BJ (cell line): ENCODE measurements at regions of chr2 and their contacts with region 1.

Region 1: GRCh38 chr2:213848631-213849030 is 562.2 kb upstream of the VWC2L start:
- DNase-seq: no peak
- H3K4me3 ChIP-seq: no peak overlapping the region
- H3K27me3 ChIP-seq: no peaks in the 10 kb centered on the region
- CTCF ChIP-seq: no peak

Region 2: GRCh38 chr2:211928201-211928600 is 1920.4 kb before region 1 on chr2:
- CTCF ChIA-PET with region 1: no interaction called
- POLR2A ChIA-PET with region 1: interaction called, 18 read pairs
- DNase-seq: no peak
- H3K4me3 ChIP-seq: no peak overlapping the region
- H3K27me3 ChIP-seq: no peaks in the 10 kb centered on the region
- CTCF ChIP-seq: no peak

Region 3: DNA sequence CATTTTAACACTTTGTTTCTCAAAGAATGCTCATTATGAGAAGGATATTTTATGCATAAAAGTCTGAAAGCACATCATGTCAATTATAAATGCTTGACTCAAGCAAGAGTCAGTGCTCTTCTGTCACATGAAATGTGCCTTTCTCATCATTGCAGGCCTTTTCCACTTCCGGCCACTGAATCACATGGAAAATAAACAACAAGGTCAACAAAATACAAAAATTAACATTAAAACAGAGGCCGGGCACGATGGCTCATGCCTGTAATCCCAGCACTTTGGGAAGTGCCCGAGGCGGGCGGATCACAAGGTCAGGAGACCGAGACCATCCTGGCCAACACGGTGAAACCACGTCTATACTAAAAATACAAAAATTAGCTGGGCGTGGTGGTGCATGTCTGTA is 83.8 kb before region 1 on chr2:
- CTCF ChIA-PET with region 1: no interaction called
- POLR2A ChIA-PET with region 1: no interaction called
- DNase-seq: no peak
- H3K4me3 ChIP-seq: no peak overlapping the region
- H3K27me3 ChIP-seq: no peaks in the 10 kb centered on the region
- CTCF ChIP-seq: no peak

Region 4: GRCh38 chr2:213787869-213788268 is 60.8 kb before region 1 on chr2:
- CTCF ChIA-PET with region 1: no interaction called
- POLR2A ChIA-PET with region 1: no interaction called
- DNase-seq: no peak
- H3K4me3 ChIP-seq: no peak overlapping the region
- H3K27me3 ChIP-seq: no peaks in the 10 kb centered on the region
- CTCF ChIP-seq: no peak

Region 5: DNA sequence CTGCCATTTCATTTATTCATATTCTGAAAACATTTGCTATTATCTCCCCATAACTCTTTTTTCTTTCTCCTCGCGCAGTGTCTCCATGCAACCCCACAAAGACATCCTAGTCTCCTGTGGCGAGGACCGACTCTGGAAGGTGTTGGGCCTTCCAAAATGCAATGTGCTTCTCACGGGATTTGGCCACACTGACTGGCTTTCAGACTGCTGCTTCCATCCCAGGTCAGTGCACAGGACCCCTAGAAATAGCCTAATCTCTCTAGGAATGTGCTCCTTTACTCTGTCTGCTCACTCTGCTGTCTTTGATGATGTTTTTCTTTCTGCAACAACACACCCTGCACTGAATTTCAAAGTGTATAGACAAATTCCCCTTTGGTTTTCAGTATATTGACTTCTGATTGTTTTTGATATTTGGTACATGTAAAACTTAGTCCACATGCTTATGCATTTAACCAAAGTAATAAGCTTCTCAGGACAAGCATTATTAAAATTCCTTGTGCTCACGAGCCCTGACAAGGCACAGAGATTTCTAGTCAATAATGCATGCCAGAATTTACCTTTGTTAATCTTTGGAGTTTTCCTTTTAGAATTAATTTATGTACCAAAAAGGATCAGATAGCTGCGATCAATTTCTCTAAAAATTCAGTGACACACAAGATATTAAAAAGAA is 13.9 kb after region 1 on chr2:
- CTCF ChIA-PET with region 1: no interaction called
- POLR2A ChIA-PET with region 1: no interaction called
- DNase-seq: no peak
- H3K4me3 ChIP-seq: no peak overlapping the region
- H3K27me3 ChIP-seq: no peaks in the 10 kb centered on the region
- CTCF ChIP-seq: no peak